ENCODE measurements at regions of chr21 and their contacts with region 1.

Region 1: DNA sequence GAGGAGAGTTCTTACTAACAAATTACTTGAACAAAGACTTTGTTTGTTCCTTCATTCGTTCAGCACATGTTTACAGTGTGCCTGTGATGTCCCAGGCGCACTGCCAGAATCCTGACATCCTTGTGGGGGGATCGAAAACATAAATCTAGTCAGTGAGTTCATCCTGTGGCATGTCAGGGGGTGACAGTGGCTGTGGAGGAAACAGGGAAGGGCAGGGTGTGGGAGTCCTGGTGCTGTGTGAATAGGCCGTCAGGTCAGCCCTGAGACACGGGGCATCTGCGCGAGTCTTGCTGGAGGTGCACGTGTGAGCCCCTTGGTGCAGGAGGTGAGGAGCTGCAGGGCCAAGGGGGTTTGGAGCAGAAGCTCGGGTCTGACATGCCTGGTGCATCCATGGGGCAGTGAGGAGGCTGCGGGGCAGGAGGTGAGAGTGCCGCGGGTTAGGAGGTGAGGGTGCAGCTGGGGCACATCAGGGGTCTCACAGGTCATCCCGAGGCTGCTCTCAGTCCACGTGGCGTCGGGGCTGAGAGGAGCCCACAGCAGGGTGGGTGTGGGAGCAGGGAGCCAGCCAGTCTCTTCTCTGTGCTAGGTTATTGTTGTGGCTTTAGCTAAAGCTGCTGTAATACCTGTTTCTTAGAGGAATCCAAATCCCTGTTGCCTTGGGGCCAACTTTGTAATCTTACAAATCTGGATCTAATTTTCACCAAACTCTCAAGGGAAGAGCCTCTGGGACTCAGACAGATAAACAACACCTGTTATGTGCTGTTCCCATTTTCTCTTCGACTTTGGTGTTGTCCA is 93.4 kb downstream of the PCBP3 start:
- DNase-seq: no peak
- ATAC-seq: no peak
- H3K4me3 ChIP-seq: no peak overlapping the region
- H3K4me3 Mint-ChIP-seq: no peak overlapping the region
- H3K27ac ChIP-seq: no peak overlapping the region
- H3K27ac Mint-ChIP-seq: no peak overlapping the region
- H3K4me1 ChIP-seq: peaks cover 17% of the 10 kb centered on the region
- H3K4me1 Mint-ChIP-seq: peaks cover 12% of the 10 kb centered on the region
- H3K27me3 ChIP-seq: no peaks in the 10 kb centered on the region
- H3K27me3 Mint-ChIP-seq: peaks cover 3% of the 10 kb centered on the region
- CTCF ChIP-seq: no peak

Region 2: GRCh38 chr21:45750936-45751335 is 14.0 kb after region 1 on chr21:
- CTCF ChIA-PET with region 1: no interaction called
- POLR2A ChIA-PET with region 1: no interaction called
- intact Hi-C with region 1: loop called in 1 of 2 experiments (anchors 1 kb)
- DNase-seq: no peak
- ATAC-seq: no peak
- H3K4me3 ChIP-seq: no peak overlapping the region
- H3K4me3 Mint-ChIP-seq: no peak overlapping the region
- H3K27ac ChIP-seq: no peak overlapping the region
- H3K27ac Mint-ChIP-seq: no peak overlapping the region
- H3K4me1 ChIP-seq: no peaks in the 10 kb centered on the region
- H3K4me1 Mint-ChIP-seq: peaks cover 2% of the 10 kb centered on the region
- H3K27me3 ChIP-seq: no peaks in the 10 kb centered on the region
- H3K27me3 Mint-ChIP-seq: no peaks in the 10 kb centered on the region
- CTCF ChIP-seq: no peak

Measured in CD8-positive, alpha-beta T cell (primary cell).